Naive thymus-derived CD4-positive, alpha-beta T cell (primary cell): ENCODE measurements at regions of chr19 and their contacts with region 1.

Region 1: GRCh38 chr19:36915992-36916830 is at the starts of genes ZNF568 and ZNF829:
- DNase-seq: peak; percentile 78 to 96 (median 93)
- ATAC-seq: peak; percentile 97
- H3K4me3 ChIP-seq: peak within 1 kb of the TSS; percentile 95
- H3K4me3 Mint-ChIP-seq: peak within 1 kb of the TSS; percentile 87 to 99 (median 95)
- H3K27ac ChIP-seq: peak within 1 kb of the TSS; percentile 94
- H3K27ac Mint-ChIP-seq: peak within 1 kb of the TSS; percentile 90 to 97 (median 94)
- H3K4me1 ChIP-seq: peaks cover 8 to 13% of the 10 kb centered on the region in 2 donors
- H3K4me1 Mint-ChIP-seq: peaks cover 19 to 46% (median 29%) of the 10 kb centered on the region in 7 donors
- H3K27me3 ChIP-seq: no peaks in the 10 kb centered on the region
- H3K27me3 Mint-ChIP-seq: no peaks in the 10 kb centered on the region
- total RNA-seq, gene ZNF568: 8.2 to 18.0 (median 9.3) TPM
- total RNA-seq, gene ZNF829: 2.6 to 9.0 (median 6.3) TPM

Region 2: GRCh38 chr19:36514012-36514612 is 402.1 kb before region 1 on chr19:
- CTCF ChIA-PET with region 1: no interaction called
- POLR2A ChIA-PET with region 1: no interaction called
- intact Hi-C with region 1: no loop called
- DNase-seq: no peak
- ATAC-seq: no peak
- H3K4me3 ChIP-seq: peak overlapping the region; percentile 4
- H3K4me3 Mint-ChIP-seq: no peak overlapping the region
- H3K27ac ChIP-seq: no peak overlapping the region
- H3K27ac Mint-ChIP-seq: no peak overlapping the region
- H3K4me1 ChIP-seq: no peaks in the 10 kb centered on the region
- H3K4me1 Mint-ChIP-seq: peaks cover 0 to 6% (median 4%) of the 10 kb centered on the region in 7 donors
- H3K27me3 ChIP-seq: no peaks in the 10 kb centered on the region
- H3K27me3 Mint-ChIP-seq: no peaks in the 10 kb centered on the region

Region 3: GRCh38 chr19:36528194-36528920 is 387.9 kb before region 1 on chr19 and contains the start of gene ZNF260:
- CTCF ChIA-PET with region 1: no interaction called
- POLR2A ChIA-PET with region 1: no interaction called
- intact Hi-C with region 1: loop called in 1 of 2 experiments (anchors 5 kb)
- DNase-seq: peak; percentile 81 to 94 (median 90)
- ATAC-seq: peak; percentile 95
- H3K4me3 ChIP-seq: peak within 1 kb of the TSS; percentile 91
- H3K4me3 Mint-ChIP-seq: peak within 1 kb of the TSS; percentile 88 to 100 (median 98)
- H3K27ac ChIP-seq: peak within 1 kb of the TSS; percentile 83
- H3K27ac Mint-ChIP-seq: peak within 1 kb of the TSS; percentile 84 to 99 (median 96)
- H3K4me1 ChIP-seq: peaks cover 4 to 11% of the 10 kb centered on the region in 2 donors
- H3K4me1 Mint-ChIP-seq: peaks cover 15 to 31% (median 23%) of the 10 kb centered on the region in 7 donors
- H3K27me3 ChIP-seq: no peaks in the 10 kb centered on the region
- H3K27me3 Mint-ChIP-seq: no peaks in the 10 kb centered on the region
- total RNA-seq, gene ZNF260: 2.9 to 13.2 (median 11.3) TPM

Region 4: DNA sequence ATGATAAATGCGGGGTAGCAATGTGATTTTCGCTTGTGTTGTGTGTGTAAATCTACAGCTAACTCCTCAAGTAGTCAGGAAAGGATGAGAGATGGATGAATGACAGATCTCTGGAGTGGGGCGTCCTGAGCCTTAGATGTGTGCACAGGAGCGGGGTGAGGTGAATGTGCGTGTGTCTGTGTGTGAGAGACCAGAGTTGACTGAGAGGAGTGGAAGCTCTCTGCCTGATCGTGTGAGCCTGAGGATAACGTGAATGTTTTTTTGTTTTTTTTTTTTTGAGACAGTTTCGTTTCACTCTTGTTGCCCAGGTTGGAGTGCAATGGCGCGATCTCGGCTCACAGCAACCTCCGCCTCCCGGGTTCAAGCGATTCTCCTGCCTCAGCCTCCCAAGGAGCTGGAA is 250.4 kb before region 1 on chr19:
- CTCF ChIA-PET with region 1: no interaction called
- POLR2A ChIA-PET with region 1: no interaction called
- intact Hi-C with region 1: loop called (anchors 1 kb)
- DNase-seq: peak in 1 of 9 donors; percentile 2
- ATAC-seq: no peak
- H3K4me3 ChIP-seq: peak overlapping the region; percentile 88
- H3K4me3 Mint-ChIP-seq: peak overlapping the region; percentile 91 to 100 (median 98)
- H3K27ac ChIP-seq: no peak overlapping the region
- H3K27ac Mint-ChIP-seq: peak overlapping the region; percentile 29 to 99 (median 93)
- H3K4me1 ChIP-seq: peaks cover 0 to 10% of the 10 kb centered on the region in 2 donors
- H3K4me1 Mint-ChIP-seq: peaks cover 17 to 42% (median 35%) of the 10 kb centered on the region in 7 donors
- H3K27me3 ChIP-seq: no peaks in the 10 kb centered on the region
- H3K27me3 Mint-ChIP-seq: no peaks in the 10 kb centered on the region

Region 5: GRCh38 chr19:36837906-36838783 is 78.1 kb before region 1 on chr19 and contains the start of gene ZNF790:
- CTCF ChIA-PET with region 1: no interaction called
- POLR2A ChIA-PET with region 1: interaction called, 5 read pairs
- intact Hi-C with region 1: loop called (anchors 1 kb)
- DNase-seq: peak; percentile 68 to 91 (median 85)
- ATAC-seq: peak; percentile 95
- H3K4me3 ChIP-seq: peak within 1 kb of the TSS; percentile 92
- H3K4me3 Mint-ChIP-seq: peak within 1 kb of the TSS in 1 of 10 donors; percentile 22
- H3K27ac ChIP-seq: peak within 1 kb of the TSS; percentile 92
- H3K27ac Mint-ChIP-seq: peak within 1 kb of the TSS in 5 of 9 donors; percentile 39 to 65 (median 51)
- H3K4me1 ChIP-seq: peaks cover 6 to 11% of the 10 kb centered on the region in 2 donors
- H3K4me1 Mint-ChIP-seq: peaks cover 0 to 21% (median 14%) of the 10 kb centered on the region in 7 donors
- H3K27me3 ChIP-seq: no peaks in the 10 kb centered on the region
- H3K27me3 Mint-ChIP-seq: no peaks in the 10 kb centered on the region
- total RNA-seq, gene ZNF790: 2.6 to 14.4 (median 7.3) TPM

Region 6: DNA sequence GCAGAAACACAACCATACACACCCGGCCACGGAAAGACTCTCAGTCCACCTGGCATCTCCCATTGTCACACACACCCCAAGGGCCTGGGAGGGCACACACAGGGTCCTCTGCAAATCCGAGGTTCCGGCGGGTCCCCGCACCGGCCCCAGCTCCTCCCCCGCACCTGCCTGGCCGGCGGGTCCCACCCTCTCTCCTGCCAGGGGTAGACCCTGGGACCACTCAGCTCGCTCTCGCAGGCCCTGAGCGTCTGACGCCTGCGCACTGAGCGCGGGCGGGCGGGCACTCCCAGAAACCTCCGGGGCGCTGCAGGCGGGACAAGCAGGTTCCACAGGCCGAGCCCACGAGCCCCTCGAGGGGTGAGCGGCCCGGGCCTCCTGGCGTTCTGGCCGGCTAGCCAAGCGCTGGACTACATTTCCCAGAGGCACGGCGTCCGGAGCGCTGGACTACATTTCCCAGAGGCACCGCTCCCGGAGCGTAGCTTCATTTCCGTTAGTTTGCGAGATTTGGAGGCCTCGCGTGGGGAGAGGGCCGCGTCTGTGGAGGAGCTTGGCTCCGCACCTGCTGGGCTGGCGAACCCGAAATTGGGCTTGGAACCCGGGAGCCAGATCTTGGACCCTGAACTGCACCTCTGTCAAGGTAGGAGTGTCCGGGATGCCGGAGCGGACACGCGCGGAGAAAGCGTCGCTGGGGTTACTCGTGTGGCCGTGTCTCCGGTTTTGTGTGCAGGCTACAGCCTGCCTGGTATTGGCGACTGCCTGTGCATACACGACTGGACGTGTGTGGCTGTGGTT is 161.9 kb after region 1 on chr19 and contains the start of gene ZNF420:
- CTCF ChIA-PET with region 1: no interaction called
- POLR2A ChIA-PET with region 1: no interaction called
- intact Hi-C with region 1: loop called in 1 of 2 experiments (anchors 1 kb)
- DNase-seq: peak; percentile 64 to 89 (median 84)
- ATAC-seq: peak; percentile 98
- H3K4me3 ChIP-seq: peak within 1 kb of the TSS; percentile 92
- H3K4me3 Mint-ChIP-seq: peak within 1 kb of the TSS; percentile 90 to 100 (median 96)
- H3K27ac ChIP-seq: peak within 1 kb of the TSS; percentile 82
- H3K27ac Mint-ChIP-seq: peak within 1 kb of the TSS; percentile 70 to 99 (median 94)
- H3K4me1 ChIP-seq: peaks cover 11 to 19% of the 10 kb centered on the region in 2 donors
- H3K4me1 Mint-ChIP-seq: peaks cover 16 to 43% (median 34%) of the 10 kb centered on the region in 7 donors
- H3K27me3 ChIP-seq: no peaks in the 10 kb centered on the region
- H3K27me3 Mint-ChIP-seq: no peaks in the 10 kb centered on the region
- total RNA-seq, gene ZNF420: 10.8 to 34.9 (median 15.9) TPM

Region 7: GRCh38 chr19:37370880-37371661 is 454.9 kb after region 1 on chr19 and contains the start of gene ZNF527:
- CTCF ChIA-PET with region 1: no interaction called
- POLR2A ChIA-PET with region 1: no interaction called
- intact Hi-C with region 1: loop called in 1 of 2 experiments (anchors 1 kb)
- DNase-seq: peak; percentile 92 to 97 (median 96)
- ATAC-seq: peak; percentile 96
- H3K4me3 ChIP-seq: peak within 1 kb of the TSS; percentile 85
- H3K4me3 Mint-ChIP-seq: peak within 1 kb of the TSS; percentile 92 to 100 (median 98)
- H3K27ac ChIP-seq: peak within 1 kb of the TSS; percentile 74
- H3K27ac Mint-ChIP-seq: peak within 1 kb of the TSS; percentile 87 to 99 (median 97)
- H3K4me1 ChIP-seq: peaks cover 0 to 8% of the 10 kb centered on the region in 2 donors
- H3K4me1 Mint-ChIP-seq: peaks cover 7 to 25% (median 17%) of the 10 kb centered on the region in 7 donors
- H3K27me3 ChIP-seq: no peaks in the 10 kb centered on the region
- H3K27me3 Mint-ChIP-seq: no peaks in the 10 kb centered on the region
- total RNA-seq, gene ZNF527: 5.6 to 13.6 (median 13.2) TPM

Region 8: DNA sequence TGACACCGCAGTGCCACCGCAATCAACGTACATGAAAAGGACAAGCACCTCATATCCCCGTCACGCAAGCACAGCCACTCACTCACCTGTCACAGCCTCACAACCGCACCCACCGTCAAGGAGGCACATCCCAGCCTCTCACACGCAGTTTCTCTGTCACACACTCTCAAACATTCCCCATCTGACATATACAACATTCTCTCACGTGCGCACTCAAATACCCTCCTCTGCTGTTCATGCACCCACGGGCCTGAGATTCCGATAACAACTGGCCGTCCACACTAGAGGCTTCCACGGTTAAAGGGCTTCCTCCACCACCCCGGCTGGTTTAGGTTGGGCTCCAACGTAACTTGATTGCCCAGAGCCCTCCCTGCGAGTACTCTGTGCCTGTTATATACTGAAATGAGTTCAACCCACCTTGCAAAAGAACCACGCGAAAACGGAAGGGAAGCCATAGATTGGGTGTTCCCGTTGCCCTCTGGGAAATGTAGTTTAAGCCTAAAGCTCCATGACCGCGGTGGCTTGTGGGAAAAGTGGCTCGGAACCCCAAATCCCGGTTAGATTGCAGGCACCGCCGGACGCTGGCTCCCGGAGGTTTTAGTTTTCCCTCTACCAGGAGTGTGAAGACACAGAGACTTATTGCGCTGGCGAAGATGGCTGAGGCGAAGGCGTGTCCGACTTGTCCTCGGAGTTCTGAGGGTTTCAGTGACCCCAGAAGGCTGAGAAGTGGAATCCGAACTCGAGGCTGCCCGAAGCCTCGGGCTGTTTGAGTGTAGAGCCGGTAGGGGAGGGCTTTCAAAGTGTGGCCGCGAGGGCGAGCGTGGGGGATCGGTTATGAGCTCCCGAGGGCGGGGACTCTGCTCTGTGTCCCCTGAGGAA is 863.2 kb after region 1 on chr19 and contains the start of gene ZNF573:
- CTCF ChIA-PET with region 1: no interaction called
- POLR2A ChIA-PET with region 1: no interaction called
- intact Hi-C with region 1: loop called in 1 of 2 experiments (anchors 1 kb)
- DNase-seq: peak; percentile 62 to 99 (median 94)
- ATAC-seq: peak; percentile 94
- H3K4me3 ChIP-seq: peak within 1 kb of the TSS; percentile 82
- H3K4me3 Mint-ChIP-seq: peak within 1 kb of the TSS; percentile 91 to 98 (median 96)
- H3K27ac ChIP-seq: peak within 1 kb of the TSS; percentile 99
- H3K27ac Mint-ChIP-seq: peak within 1 kb of the TSS; percentile 89 to 100 (median 98)
- H3K4me1 ChIP-seq: peaks cover 6% of the 10 kb centered on the region in 2 donors
- H3K4me1 Mint-ChIP-seq: peaks cover 9 to 53% (median 48%) of the 10 kb centered on the region in 7 donors
- H3K27me3 ChIP-seq: no peaks in the 10 kb centered on the region
- H3K27me3 Mint-ChIP-seq: no peaks in the 10 kb centered on the region
- total RNA-seq, gene ZNF573: 5.9 to 43.8 (median 16.6) TPM